Ascending aorta (tissue), 2 donors: ENCODE measurements at regions of chr2 and their contacts with region 1.

Region 1: GRCh38 chr2:181742922-181743722 is 62.8 kb upstream of the NEUROD1 start:
- DNase-seq: no peak
- H3K4me3 ChIP-seq: no peak overlapping the region
- H3K27ac ChIP-seq: no peak overlapping the region
- H3K4me1 ChIP-seq: no peaks in the 10 kb centered on the region
- H3K27me3 ChIP-seq: no peaks in the 10 kb centered on the region
- CTCF ChIP-seq: peak; percentile 58 to 74 (median 65)

Region 2: GRCh38 chr2:181904022-181904632 is 161.0 kb after region 1 on chr2:
- intact Hi-C with region 1: loop called (anchors 1 kb)
- DNase-seq: no peak
- H3K4me3 ChIP-seq: no peak overlapping the region
- H3K27ac ChIP-seq: no peak overlapping the region
- H3K4me1 ChIP-seq: peaks cover 0 to 16% of the 10 kb centered on the region in 2 donors
- H3K27me3 ChIP-seq: no peaks in the 10 kb centered on the region
- CTCF ChIP-seq: peak in 2 of 3 experiments; percentile 47 to 50

Region 3: DNA sequence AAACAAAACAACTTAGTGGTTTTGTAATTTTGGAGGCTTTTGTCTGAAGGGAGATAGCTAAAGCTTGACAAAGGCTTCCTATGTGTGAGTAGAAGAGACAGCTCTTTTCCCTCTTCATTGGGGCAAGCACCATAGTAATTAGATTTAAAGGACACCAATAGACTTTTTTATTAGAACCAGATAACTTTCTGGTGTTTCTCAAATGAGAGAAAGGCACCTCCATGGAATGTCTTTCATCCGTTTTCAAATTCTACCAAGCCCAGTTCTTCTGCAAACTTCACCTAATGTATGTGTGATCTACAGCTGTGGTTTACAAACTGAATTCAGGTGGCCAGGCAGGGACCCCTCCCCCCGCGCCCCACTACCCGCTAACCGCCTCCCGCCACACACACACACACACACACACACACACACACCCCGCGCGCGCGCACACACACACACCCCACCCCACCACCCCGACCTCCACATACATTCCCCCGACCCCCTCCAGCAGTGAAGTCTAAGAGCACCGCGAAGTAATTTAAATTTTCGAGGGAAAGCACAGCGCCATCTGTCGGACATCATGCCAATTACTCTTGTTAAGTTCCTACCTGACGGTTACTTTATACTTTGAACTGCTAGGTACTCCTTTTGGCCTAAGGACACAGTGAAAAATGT is 210.9 kb after region 1 on chr2:
- intact Hi-C with region 1: loop called (anchors 2 kb)
- DNase-seq: peak in 1 of 2 donors; percentile 72
- H3K4me3 ChIP-seq: peak overlapping the region; percentile 20 to 55
- H3K27ac ChIP-seq: no peak overlapping the region
- H3K4me1 ChIP-seq: no peaks in the 10 kb centered on the region
- H3K27me3 ChIP-seq: no peaks in the 10 kb centered on the region
- CTCF ChIP-seq: peak in 2 of 3 experiments; percentile 63 to 72

Region 4: GRCh38 chr2:182077451-182078142 is 334.5 kb after region 1 on chr2:
- intact Hi-C with region 1: loop called (anchors 2 kb)
- DNase-seq: no peak
- H3K4me3 ChIP-seq: no peak overlapping the region
- H3K27ac ChIP-seq: no peak overlapping the region
- H3K4me1 ChIP-seq: peaks cover 0 to 3% of the 10 kb centered on the region in 2 donors
- H3K27me3 ChIP-seq: no peaks in the 10 kb centered on the region
- CTCF ChIP-seq: peak; percentile 27 to 79 (median 71)

Region 5: DNA sequence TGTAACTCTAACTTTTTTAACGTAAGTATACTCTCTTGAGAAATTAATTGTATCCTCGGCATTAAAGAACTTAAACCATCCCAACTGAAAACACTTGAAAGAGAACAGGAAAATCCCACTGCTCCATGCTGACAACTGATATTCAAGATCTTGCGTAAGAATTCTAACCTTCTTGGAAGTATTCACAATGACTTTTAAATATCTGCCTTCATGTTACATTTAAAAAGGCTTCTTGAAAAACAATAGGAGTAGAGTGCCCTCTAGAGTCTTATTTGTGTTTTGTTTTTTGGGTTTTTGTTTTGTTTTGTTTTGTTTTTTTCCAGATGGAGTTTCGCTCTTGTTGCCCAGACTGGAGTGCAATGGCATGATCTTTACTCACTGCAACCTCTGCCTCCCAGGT is 907.6 kb after region 1 on chr2:
- intact Hi-C with region 1: loop called (anchors 10 kb)
- DNase-seq: no peak
- H3K4me3 ChIP-seq: peak overlapping the region in 1 of 2 donors; percentile 15
- H3K27ac ChIP-seq: no peak overlapping the region
- H3K4me1 ChIP-seq: peaks cover 0 to 2% of the 10 kb centered on the region in 2 donors
- H3K27me3 ChIP-seq: no peaks in the 10 kb centered on the region
- CTCF ChIP-seq: peak; percentile 35 to 62 (median 38)